CD8-positive, alpha-beta T cell (primary cell): ENCODE measurements at regions of chr7 and their contacts with region 1.

Region 1: DNA sequence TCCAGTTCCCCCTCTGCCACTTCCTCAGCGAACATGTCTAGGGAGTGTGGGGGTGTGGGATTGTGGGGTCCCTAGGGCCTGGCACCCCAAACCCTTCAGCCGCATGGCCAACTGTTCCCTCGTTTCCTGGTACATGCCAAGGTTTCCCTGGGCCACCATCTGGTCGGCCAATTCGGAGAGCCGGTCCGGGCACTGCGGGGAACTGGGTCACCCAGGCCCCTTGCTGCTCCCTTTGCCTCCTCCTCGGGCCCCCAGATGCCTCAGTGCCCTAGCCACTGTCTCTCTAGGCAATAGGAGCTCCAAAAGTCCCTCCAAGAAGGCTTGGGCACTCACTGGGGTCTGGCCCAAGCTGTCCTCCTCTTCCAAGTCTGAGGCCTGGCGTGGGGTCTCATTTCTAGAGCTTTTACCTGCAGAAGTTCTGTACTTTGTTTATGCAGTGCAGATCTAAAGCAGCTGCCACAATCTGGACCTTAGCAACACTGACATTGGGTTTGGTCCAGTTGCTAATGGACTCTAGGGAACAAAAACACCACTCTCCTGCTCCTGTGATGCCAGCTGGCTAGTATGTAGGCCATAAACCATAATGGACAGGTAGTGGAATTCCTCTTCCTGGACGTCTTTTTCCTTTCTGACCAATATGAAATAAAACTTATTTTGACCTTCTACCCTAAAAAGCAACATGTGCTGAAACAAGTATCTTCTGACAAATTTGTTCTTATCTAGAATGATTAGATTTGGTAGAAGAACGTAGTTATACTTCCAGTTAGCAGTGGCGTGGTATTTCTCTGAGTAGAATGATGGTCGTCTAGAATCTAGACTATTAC is 172.9 kb downstream of the LRRC4 start:
- DNase-seq: no peak
- ATAC-seq: no peak
- H3K4me3 ChIP-seq: no peak overlapping the region
- H3K4me3 Mint-ChIP-seq: no peak overlapping the region
- H3K27ac ChIP-seq: no peak overlapping the region
- H3K27ac Mint-ChIP-seq: no peak overlapping the region
- H3K4me1 ChIP-seq: peaks cover 42% of the 10 kb centered on the region
- H3K4me1 Mint-ChIP-seq: peaks cover 48% of the 10 kb centered on the region
- H3K27me3 ChIP-seq: peaks cover 0 to 3% of the 10 kb centered on the region in 2 experiments
- H3K27me3 Mint-ChIP-seq: peaks cover 14% of the 10 kb centered on the region
- CTCF ChIP-seq: no peak

Region 2: GRCh38 chr7:127585044-127585953 is 273.0 kb before region 1 on chr7 and contains the start of gene GCC1:
- CTCF ChIA-PET with region 1: no interaction called
- POLR2A ChIA-PET with region 1: no interaction called
- intact Hi-C with region 1: loop called in 1 of 2 experiments (anchors 2 kb)
- DNase-seq: peak; percentile 89 to 98 (median 94)
- ATAC-seq: peak; percentile 83
- H3K4me3 ChIP-seq: peak within 1 kb of the TSS; percentile 91 to 99
- H3K4me3 Mint-ChIP-seq: peak within 1 kb of the TSS; percentile 92
- H3K27ac ChIP-seq: peak within 1 kb of the TSS; percentile 94 to 95
- H3K27ac Mint-ChIP-seq: peak within 1 kb of the TSS; percentile 93
- H3K4me1 ChIP-seq: peaks cover 71% of the 10 kb centered on the region
- H3K4me1 Mint-ChIP-seq: peaks cover 79% of the 10 kb centered on the region
- H3K27me3 ChIP-seq: no peaks in the 10 kb centered on the region
- H3K27me3 Mint-ChIP-seq: no peaks in the 10 kb centered on the region
- CTCF ChIP-seq: no peak
- total RNA-seq, gene GCC1: 33.8 to 36.6 TPM

Region 3: DNA sequence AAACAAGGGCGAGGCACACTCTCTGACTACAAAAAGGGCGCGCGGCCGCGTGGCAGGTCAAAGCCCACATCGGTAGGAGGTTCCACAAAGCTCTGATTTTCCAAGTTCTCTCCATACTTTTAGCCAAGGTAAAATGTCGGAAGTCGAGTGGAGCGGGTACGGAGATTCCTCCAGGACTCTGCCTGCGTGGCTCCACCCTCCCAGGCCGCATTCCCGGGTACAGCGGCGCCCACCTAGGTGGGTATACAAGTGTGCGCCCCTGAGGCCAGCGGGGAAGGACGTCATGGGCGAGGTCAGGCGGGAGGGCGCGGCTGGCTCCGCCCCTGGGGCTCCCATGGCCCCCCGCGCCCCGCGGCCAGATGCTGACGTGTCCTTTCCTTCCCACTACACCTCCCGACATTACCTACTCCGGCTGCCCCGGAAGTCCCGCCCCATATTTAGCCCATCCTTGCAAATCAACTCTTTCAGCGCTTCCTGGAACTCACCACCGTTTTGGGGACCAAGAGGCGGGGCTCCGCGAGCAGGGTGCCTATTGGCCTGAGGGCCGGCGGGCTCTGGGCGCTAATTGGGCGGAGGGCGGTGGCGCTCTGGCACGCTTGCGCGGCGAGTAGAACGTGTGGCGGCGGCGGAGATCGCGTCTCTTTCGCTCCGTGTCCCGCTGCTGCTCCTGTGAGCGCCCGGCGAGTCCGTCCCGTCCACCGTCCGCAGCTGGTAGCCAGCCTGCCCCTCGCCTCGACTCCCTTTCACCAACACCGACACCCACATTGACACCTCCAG is 206.6 kb before region 1 on chr7 and contains the start of gene SND1:
- CTCF ChIA-PET with region 1: no interaction called
- POLR2A ChIA-PET with region 1: no interaction called
- intact Hi-C with region 1: loop called in 1 of 2 experiments (anchors 5 kb)
- DNase-seq: peak; percentile 96 to 100 (median 98)
- ATAC-seq: peak; percentile 94
- H3K4me3 ChIP-seq: peak within 1 kb of the TSS; percentile 82 to 98
- H3K4me3 Mint-ChIP-seq: peak within 1 kb of the TSS; percentile 98
- H3K27ac ChIP-seq: peak within 1 kb of the TSS; percentile 92 to 98
- H3K27ac Mint-ChIP-seq: peak within 1 kb of the TSS; percentile 99
- H3K4me1 ChIP-seq: peaks cover 35% of the 10 kb centered on the region
- H3K4me1 Mint-ChIP-seq: peaks cover 50% of the 10 kb centered on the region
- H3K27me3 ChIP-seq: no peaks in the 10 kb centered on the region
- H3K27me3 Mint-ChIP-seq: no peaks in the 10 kb centered on the region
- CTCF ChIP-seq: no peak
- total RNA-seq, gene SND1: 87.7 to 101 TPM

Region 4: GRCh38 chr7:127733986-127734385 is 124.3 kb before region 1 on chr7:
- CTCF ChIA-PET with region 1: no interaction called
- POLR2A ChIA-PET with region 1: no interaction called
- intact Hi-C with region 1: no loop called
- DNase-seq: no peak
- ATAC-seq: no peak
- H3K4me3 ChIP-seq: no peak overlapping the region
- H3K4me3 Mint-ChIP-seq: no peak overlapping the region
- H3K27ac ChIP-seq: no peak overlapping the region
- H3K27ac Mint-ChIP-seq: no peak overlapping the region
- H3K4me1 ChIP-seq: no peaks in the 10 kb centered on the region
- H3K4me1 Mint-ChIP-seq: peaks cover 3% of the 10 kb centered on the region
- H3K27me3 ChIP-seq: no peaks in the 10 kb centered on the region
- H3K27me3 Mint-ChIP-seq: no peaks in the 10 kb centered on the region
- CTCF ChIP-seq: no peak

Region 5: GRCh38 chr7:127766831-127767459 is 91.4 kb before region 1 on chr7:
- CTCF ChIA-PET with region 1: no interaction called
- POLR2A ChIA-PET with region 1: no interaction called
- intact Hi-C with region 1: no loop called
- DNase-seq: peak in 2 of 9 experiments; percentile 3 to 31
- ATAC-seq: no peak
- H3K4me3 ChIP-seq: no peak overlapping the region
- H3K4me3 Mint-ChIP-seq: no peak overlapping the region
- H3K27ac ChIP-seq: peak overlapping the region in 1 of 2 experiments; percentile 58
- H3K27ac Mint-ChIP-seq: no peak overlapping the region
- H3K4me1 ChIP-seq: peaks cover 9% of the 10 kb centered on the region
- H3K4me1 Mint-ChIP-seq: peaks cover 53% of the 10 kb centered on the region
- H3K27me3 ChIP-seq: no peaks in the 10 kb centered on the region
- H3K27me3 Mint-ChIP-seq: no peaks in the 10 kb centered on the region
- CTCF ChIP-seq: no peak

Region 6: GRCh38 chr7:127819975-127820731 is 38.1 kb before region 1 on chr7:
- CTCF ChIA-PET with region 1: no interaction called
- POLR2A ChIA-PET with region 1: no interaction called
- intact Hi-C with region 1: loop called in 1 of 2 experiments (anchors 2 kb)
- DNase-seq: peak in 1 of 9 experiments; percentile 16
- ATAC-seq: no peak
- H3K4me3 ChIP-seq: no peak overlapping the region
- H3K4me3 Mint-ChIP-seq: no peak overlapping the region
- H3K27ac ChIP-seq: no peak overlapping the region
- H3K27ac Mint-ChIP-seq: peak overlapping the region; percentile 62
- H3K4me1 ChIP-seq: peaks cover 3% of the 10 kb centered on the region
- H3K4me1 Mint-ChIP-seq: peaks cover 46% of the 10 kb centered on the region
- H3K27me3 ChIP-seq: no peaks in the 10 kb centered on the region
- H3K27me3 Mint-ChIP-seq: no peaks in the 10 kb centered on the region
- CTCF ChIP-seq: no peak

Region 7: GRCh38 chr7:127884066-127884559 is 25.8 kb after region 1 on chr7:
- CTCF ChIA-PET with region 1: no interaction called
- POLR2A ChIA-PET with region 1: no interaction called
- intact Hi-C with region 1: no loop called
- DNase-seq: no peak
- ATAC-seq: no peak
- H3K4me3 ChIP-seq: no peak overlapping the region
- H3K4me3 Mint-ChIP-seq: no peak overlapping the region
- H3K27ac ChIP-seq: no peak overlapping the region
- H3K27ac Mint-ChIP-seq: no peak overlapping the region
- H3K4me1 ChIP-seq: no peaks in the 10 kb centered on the region
- H3K4me1 Mint-ChIP-seq: peaks cover 12% of the 10 kb centered on the region
- H3K27me3 ChIP-seq: no peaks in the 10 kb centered on the region
- H3K27me3 Mint-ChIP-seq: no peaks in the 10 kb centered on the region
- CTCF ChIP-seq: no peak

Region 8: DNA sequence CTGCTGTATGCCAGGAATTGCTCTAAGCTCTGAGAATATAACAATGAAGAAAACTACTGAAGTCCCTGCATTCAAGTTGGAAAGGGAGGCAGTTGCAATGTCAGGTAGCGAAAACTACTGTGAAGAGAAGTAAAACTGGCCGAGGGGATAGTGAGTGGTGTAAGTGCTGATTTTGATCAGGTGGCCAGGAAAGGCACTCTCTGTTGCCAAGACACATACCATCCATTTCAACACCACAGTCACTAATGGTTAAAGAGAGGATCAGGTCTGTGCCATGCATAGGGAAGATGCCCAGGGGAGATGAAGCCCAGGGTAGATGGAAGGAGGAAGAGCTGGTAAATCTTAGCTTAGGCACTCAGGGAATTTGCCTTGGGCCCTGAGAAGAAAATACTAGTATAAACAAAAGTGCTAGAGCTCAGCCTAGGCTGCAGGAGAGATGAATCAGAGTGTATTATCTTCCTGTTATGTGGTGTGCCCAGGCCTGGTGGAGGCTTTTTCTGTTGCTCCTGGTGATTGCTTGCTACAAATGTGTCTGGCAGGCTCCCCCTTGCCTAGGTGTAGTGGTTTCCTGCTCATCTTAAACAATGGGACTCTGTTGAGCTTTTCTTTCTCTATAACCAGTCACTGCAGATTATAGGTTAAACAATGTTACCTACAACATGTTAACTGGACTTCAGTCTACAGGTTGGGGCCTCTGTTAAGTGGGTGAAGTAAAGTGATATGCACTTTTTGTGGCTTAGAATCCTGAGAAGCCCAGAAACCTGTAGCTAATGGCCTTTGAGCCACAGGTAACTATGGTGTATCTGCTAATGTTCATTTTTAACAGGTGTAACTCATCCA is 47.4 kb after region 1 on chr7:
- CTCF ChIA-PET with region 1: no interaction called
- POLR2A ChIA-PET with region 1: no interaction called
- intact Hi-C with region 1: loop called in 1 of 2 experiments (anchors 10 kb)
- DNase-seq: peak in 2 of 9 experiments; percentile 3 to 16
- ATAC-seq: no peak
- H3K4me3 ChIP-seq: no peak overlapping the region
- H3K4me3 Mint-ChIP-seq: no peak overlapping the region
- H3K27ac ChIP-seq: no peak overlapping the region
- H3K27ac Mint-ChIP-seq: no peak overlapping the region
- H3K4me1 ChIP-seq: peaks cover 17% of the 10 kb centered on the region
- H3K4me1 Mint-ChIP-seq: peaks cover 48% of the 10 kb centered on the region
- H3K27me3 ChIP-seq: no peaks in the 10 kb centered on the region
- H3K27me3 Mint-ChIP-seq: no peaks in the 10 kb centered on the region
- CTCF ChIP-seq: no peak

Region 9: GRCh38 chr7:128104035-128104742 is 245.9 kb after region 1 on chr7:
- CTCF ChIA-PET with region 1: no interaction called
- POLR2A ChIA-PET with region 1: interaction called, 3 read pairs
- intact Hi-C with region 1: loop called in 1 of 2 experiments (anchors 10 kb)
- DNase-seq: peak in 4 of 9 experiments; percentile 26 to 59 (median 43)
- ATAC-seq: peak; percentile 14
- H3K4me3 ChIP-seq: peak overlapping the region; percentile 54 to 56
- H3K4me3 Mint-ChIP-seq: peak overlapping the region; percentile 84
- H3K27ac ChIP-seq: no peak overlapping the region
- H3K27ac Mint-ChIP-seq: peak overlapping the region; percentile 71
- H3K4me1 ChIP-seq: peaks cover 45% of the 10 kb centered on the region
- H3K4me1 Mint-ChIP-seq: peaks cover 63% of the 10 kb centered on the region
- H3K27me3 ChIP-seq: no peaks in the 10 kb centered on the region
- H3K27me3 Mint-ChIP-seq: no peaks in the 10 kb centered on the region
- CTCF ChIP-seq: no peak